ENCODE measurements at regions of chr12 and their contacts with region 1.

Region 1: GRCh38 chr12:6335451-6336078 is 6.3 kb downstream of the TNFRSF1A start:
- DNase-seq: peak; percentile 77
- H3K4me3 ChIP-seq: peak overlapping the region; percentile 40
- H3K27ac ChIP-seq: peak overlapping the region; percentile 99
- H3K4me1 ChIP-seq: peaks cover 29% of the 10 kb centered on the region
- H3K27me3 ChIP-seq: no peaks in the 10 kb centered on the region
- CTCF ChIP-seq: no peak

Region 2: DNA sequence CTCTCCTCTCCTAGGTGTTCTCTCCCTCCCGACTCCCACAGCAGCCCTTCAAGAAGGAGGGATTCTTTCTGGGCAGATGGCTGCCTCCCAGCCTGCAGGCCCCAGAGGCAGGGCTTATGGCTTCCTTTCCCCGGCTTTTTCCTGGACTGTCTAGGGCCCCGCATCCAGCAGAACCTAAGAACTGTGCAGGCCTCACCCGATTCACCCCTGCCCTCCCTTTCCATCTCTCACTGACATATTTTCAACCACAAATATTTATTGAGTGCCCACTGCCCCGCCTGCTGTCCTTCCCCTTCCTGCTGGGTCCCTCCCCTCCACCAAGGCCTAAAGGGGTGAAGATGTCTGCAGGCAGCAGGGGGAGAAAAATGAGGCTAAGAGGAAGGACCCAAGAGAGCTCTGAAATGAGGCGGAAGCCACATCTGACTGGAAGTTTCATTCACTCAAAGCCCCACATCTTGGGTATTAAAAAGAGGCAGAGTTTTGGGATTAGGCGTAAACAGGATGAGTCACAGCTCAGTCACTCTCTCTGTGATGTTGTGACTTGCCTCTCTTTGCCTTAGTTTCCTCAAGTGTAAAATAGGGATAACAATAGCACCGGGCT is 36.9 kb after region 1 on chr12:
- intact Hi-C with region 1: loop called (anchors 5 kb)
- DNase-seq: no peak
- H3K4me3 ChIP-seq: peak overlapping the region; percentile 34
- H3K27ac ChIP-seq: peak overlapping the region; percentile 91
- H3K4me1 ChIP-seq: peaks cover 21% of the 10 kb centered on the region
- H3K27me3 ChIP-seq: no peaks in the 10 kb centered on the region
- CTCF ChIP-seq: no peak

Region 3: DNA sequence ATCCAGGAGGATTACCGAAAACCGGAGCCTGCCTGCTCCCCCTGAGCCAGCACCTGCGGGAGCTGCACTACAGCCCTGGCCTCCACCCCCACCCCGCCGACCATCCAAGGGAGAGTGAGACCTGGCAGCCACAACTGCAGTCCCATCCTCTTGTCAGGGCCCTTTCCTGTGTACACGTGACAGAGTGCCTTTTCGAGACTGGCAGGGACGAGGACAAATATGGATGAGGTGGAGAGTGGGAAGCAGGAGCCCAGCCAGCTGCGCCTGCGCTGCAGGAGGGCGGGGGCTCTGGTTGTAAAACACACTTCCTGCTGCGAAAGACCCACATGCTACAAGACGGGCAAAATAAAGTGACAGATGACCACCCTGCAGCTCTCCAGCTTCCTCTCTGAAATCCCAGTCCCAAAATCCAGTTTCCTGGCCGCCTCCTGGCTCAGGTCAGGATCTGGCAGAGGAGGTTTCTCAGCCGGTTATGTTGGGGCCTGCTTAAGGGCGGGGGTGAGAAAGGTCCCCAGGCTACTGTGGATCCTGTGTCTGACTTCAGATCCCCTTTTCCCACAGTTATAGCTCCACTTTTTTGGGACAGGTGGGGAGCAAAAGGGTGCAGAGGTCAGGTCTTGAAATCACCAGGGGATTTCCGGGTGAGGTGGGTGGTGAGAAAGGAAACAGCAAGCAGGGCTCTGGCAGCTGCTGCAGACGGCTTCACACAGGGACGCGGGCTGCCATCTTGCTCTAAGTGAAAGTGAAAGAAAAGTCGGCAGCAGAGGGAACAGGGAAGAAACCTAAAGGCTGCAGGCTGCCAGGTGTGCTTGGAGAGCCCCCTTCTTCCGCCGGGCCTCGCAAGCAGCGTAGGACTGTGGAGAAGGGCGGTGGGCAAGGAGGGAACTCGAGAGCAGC is 116.0 kb after region 1 on chr12 and contains the start of gene TAPBPL:
- intact Hi-C with region 1: loop called (anchors 5 kb)
- DNase-seq: peak; percentile 91
- H3K4me3 ChIP-seq: peak within 1 kb of the TSS; percentile 56
- H3K27ac ChIP-seq: peak within 1 kb of the TSS; percentile 97
- H3K4me1 ChIP-seq: peaks cover 14% of the 10 kb centered on the region
- H3K27me3 ChIP-seq: no peaks in the 10 kb centered on the region
- CTCF ChIP-seq: no peak
- total RNA-seq, gene TAPBPL: 44.9 to 57.8 TPM

Measured in colonic mucosa (tissue), 4 donors.